Activated CD4-positive, alpha-beta memory T cell treated with anti-CD3 and anti-CD28 coated beads for 36 hours (primary cell): ENCODE measurements at regions of chr1 and their contacts with region 1.

Region 1: GRCh38 chr1:53485478-53486394 is 26.5 kb downstream of the DMRTB1 start:
- DNase-seq: peak; percentile 81
- H3K4me3 Mint-ChIP-seq: no peak overlapping the region
- H3K27ac Mint-ChIP-seq: no peak overlapping the region
- H3K4me1 Mint-ChIP-seq: no peaks in the 10 kb centered on the region
- H3K27me3 Mint-ChIP-seq: peaks cover 14% of the 10 kb centered on the region

Region 2: GRCh38 chr1:53681977-53682685 is 196.4 kb after region 1 on chr1:
- CTCF ChIA-PET with region 1: interaction called, 10 read pairs
- POLR2A ChIA-PET with region 1: no interaction called
- intact Hi-C with region 1: loop called (anchors 1 kb)
- DNase-seq: peak; percentile 54
- H3K4me3 Mint-ChIP-seq: no peak overlapping the region
- H3K27ac Mint-ChIP-seq: no peak overlapping the region
- H3K4me1 Mint-ChIP-seq: peaks cover 4% of the 10 kb centered on the region
- H3K27me3 Mint-ChIP-seq: peaks cover 8% of the 10 kb centered on the region

Region 3: GRCh38 chr1:53754484-53755312 is 269.0 kb after region 1 on chr1:
- CTCF ChIA-PET with region 1: interaction called, 9 read pairs
- POLR2A ChIA-PET with region 1: no interaction called
- intact Hi-C with region 1: loop called (anchors 1 kb)
- DNase-seq: peak; percentile 38
- H3K4me3 Mint-ChIP-seq: no peak overlapping the region
- H3K27ac Mint-ChIP-seq: no peak overlapping the region
- H3K4me1 Mint-ChIP-seq: no peaks in the 10 kb centered on the region
- H3K27me3 Mint-ChIP-seq: no peaks in the 10 kb centered on the region